ENCODE measurements at regions of chr16 and their contacts with region 1.

Region 1: DNA sequence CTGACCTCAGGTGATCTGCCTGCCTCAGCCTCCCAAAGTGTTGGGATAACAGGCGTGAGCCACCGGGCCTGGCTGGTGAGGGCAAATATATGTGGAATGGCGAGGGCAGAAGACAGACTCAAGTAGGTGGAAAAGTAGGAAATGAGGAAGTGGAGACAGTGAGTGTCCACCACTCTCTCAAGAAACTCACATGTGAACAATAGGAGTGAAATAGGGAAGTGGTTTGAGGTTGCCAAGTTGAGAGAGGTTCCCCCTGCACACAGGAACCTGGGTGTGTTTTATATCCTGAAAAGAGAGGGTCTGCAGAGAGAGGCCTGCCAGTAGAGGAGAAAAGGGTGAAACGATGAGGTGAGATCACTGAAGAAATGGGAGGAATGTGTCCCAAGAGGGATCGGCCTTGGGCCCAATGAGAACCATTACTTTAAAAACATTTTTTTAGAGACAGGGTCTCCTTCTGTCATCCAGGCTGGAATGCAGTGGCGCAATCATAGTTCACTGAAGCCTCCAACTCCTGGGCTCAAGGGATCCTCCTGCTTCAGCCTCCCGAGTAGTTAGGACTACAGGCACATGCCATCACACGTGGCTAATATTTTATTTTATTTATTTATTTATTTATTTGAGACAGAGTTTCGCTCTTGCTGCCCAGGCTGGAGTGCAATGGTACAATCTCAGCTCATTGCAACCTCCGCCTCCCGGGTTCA is 17.1 kb upstream of the CORO1A start:
- DNase-seq: no peak
- ATAC-seq: no peak
- H3K4me3 Mint-ChIP-seq: no peak overlapping the region
- H3K27ac Mint-ChIP-seq: no peak overlapping the region
- H3K4me1 Mint-ChIP-seq: no peaks in the 10 kb centered on the region
- H3K27me3 Mint-ChIP-seq: peaks cover 21% of the 10 kb centered on the region
- CTCF ChIP-seq: no peak

Region 2: GRCh38 chr16:30142672-30143346 is 23.5 kb before region 1 on chr16:
- CTCF ChIA-PET with region 1: interaction called, 15 read pairs
- POLR2A ChIA-PET with region 1: no interaction called
- DNase-seq: no peak
- ATAC-seq: peak; percentile 60
- H3K4me3 Mint-ChIP-seq: no peak overlapping the region
- H3K27ac Mint-ChIP-seq: no peak overlapping the region
- H3K4me1 Mint-ChIP-seq: no peaks in the 10 kb centered on the region
- H3K27me3 Mint-ChIP-seq: peaks cover 8% of the 10 kb centered on the region
- CTCF ChIP-seq: no peak

Region 3: DNA sequence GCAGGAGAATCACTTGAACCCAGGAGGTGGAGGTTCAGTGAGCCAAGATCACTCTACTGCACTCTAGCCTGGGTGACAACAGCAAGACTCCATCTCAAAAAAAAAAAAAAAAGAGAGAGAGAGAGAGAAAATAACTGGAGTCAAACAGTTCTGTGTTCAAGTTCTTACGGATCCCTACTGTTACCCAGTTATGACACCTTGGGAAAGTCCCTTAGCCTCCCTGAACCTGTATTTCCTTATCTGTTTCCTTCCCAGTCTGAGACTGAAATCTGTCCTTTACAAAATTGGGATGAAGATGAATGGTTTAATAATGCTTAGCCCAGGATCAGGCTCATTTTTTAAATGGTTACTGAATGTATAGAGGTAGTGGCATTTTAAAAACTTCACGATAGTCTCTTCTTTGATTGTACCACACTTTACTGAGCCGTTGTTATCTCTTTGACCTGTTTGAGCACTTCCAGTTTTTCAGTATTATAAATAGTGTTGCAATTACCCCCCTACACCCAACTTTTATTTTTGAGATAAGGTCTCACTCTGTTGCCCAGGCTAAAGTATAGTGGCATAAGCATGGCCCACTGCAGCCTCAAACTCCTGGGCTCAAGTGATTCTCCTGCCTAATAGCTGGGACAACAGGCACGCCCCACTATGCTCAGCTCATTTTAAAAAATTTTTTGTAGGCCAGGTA is 342.9 kb after region 1 on chr16:
- CTCF ChIA-PET with region 1: no interaction called
- POLR2A ChIA-PET with region 1: no interaction called
- DNase-seq: no peak
- ATAC-seq: no peak
- H3K4me3 Mint-ChIP-seq: no peak overlapping the region
- H3K27ac Mint-ChIP-seq: no peak overlapping the region
- H3K4me1 Mint-ChIP-seq: no peaks in the 10 kb centered on the region
- H3K27me3 Mint-ChIP-seq: peaks cover 4% of the 10 kb centered on the region
- CTCF ChIP-seq: no peak